Activated T-helper 1 cell treated with anti-CD3 and anti-CD28 coated beads, Interleukin-12 subunit alpha, Interleukin-12 subunit beta, Interleukin-2, Interleukin-4 antibody, amounts not matched to agents 30 ng/mL and 10 ng/mL and 1 ng/mL, durations not matched to agents 14 hours and 24 hours and 36 hours (primary cell): ENCODE measurements at regions of chrX and their contacts with region 1.

Region 1: DNA sequence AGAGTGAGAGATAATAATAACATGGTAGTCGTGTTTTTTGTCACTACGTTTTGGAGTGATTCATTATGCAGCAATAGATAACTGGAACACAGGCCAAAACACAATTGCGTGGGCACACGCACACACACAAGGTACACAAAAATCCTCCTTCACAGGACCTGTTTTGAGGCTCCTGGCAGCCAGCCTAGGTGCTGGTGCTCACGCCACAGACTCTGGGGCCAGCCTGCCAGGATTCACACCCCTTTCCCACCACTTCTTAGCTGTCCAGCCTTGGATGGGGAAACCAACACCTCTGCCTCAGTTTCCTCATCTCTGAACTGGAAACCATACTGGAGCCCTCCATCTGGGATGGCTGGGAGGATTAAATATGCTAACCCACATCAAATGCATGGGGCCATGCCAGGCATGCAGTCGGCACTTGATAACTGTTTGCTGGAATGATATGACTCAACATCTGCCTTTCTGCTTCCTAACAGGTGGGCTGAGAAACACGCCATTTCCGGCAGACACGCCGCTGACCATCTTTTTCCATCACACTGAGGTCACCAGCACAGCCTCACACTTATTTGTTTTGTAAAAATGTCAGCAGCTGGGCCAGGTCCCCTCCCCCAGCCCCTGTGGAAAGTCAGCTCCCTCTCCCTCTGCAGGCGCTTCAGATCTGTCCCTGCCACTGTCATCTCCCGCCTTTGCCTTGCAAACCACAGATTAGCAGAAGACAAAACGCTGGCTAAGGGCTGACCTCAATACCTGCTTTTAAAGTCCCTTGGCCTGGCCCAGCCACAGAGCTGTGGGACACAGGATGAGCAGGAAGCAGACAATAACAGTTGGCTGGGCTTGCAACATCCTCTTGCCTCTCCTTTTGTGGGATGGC is 237.5 kb downstream of the BCOR start:
- DNase-seq: peak; percentile 79
- H3K4me3 Mint-ChIP-seq: peak overlapping the region; percentile 70
- H3K27ac Mint-ChIP-seq: peak overlapping the region; percentile 98
- H3K4me1 Mint-ChIP-seq: peaks cover 60% of the 10 kb centered on the region
- H3K27me3 Mint-ChIP-seq: no peaks in the 10 kb centered on the region

Region 2: GRCh38 chrX:39331082-39331704 is 529.0 kb before region 1 on chrX:
- intact Hi-C with region 1: loop called (anchors 1 kb)
- DNase-seq: peak; percentile 3
- H3K4me3 Mint-ChIP-seq: peak overlapping the region; percentile 42
- H3K27ac Mint-ChIP-seq: peak overlapping the region; percentile 76
- H3K4me1 Mint-ChIP-seq: peaks cover 73% of the 10 kb centered on the region
- H3K27me3 Mint-ChIP-seq: peaks cover 2% of the 10 kb centered on the region

Region 3: DNA sequence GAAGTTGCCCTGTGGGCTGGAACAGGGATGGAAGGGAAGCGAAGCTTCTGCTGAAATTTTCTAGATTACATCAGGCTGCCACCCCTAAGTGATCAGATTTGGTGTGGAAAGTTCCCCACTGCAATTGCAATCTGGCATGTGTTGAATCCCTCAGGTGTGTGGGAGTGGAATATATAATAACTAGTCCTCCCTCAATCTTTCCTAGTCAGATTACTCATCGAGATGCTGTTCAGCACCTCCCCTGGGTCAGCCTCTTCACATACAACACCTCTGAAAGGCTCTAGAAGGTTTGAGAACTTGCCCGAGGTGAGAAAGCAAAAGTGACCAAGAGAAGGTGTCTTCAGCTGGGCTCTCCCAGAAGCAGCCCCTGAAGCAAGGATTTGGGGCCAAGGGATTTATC is 99.3 kb before region 1 on chrX:
- intact Hi-C with region 1: loop called (anchors 1 kb)
- DNase-seq: no peak
- H3K4me3 Mint-ChIP-seq: peak overlapping the region; percentile 61
- H3K27ac Mint-ChIP-seq: peak overlapping the region; percentile 91
- H3K4me1 Mint-ChIP-seq: peaks cover 24% of the 10 kb centered on the region
- H3K27me3 Mint-ChIP-seq: no peaks in the 10 kb centered on the region

Region 4: DNA sequence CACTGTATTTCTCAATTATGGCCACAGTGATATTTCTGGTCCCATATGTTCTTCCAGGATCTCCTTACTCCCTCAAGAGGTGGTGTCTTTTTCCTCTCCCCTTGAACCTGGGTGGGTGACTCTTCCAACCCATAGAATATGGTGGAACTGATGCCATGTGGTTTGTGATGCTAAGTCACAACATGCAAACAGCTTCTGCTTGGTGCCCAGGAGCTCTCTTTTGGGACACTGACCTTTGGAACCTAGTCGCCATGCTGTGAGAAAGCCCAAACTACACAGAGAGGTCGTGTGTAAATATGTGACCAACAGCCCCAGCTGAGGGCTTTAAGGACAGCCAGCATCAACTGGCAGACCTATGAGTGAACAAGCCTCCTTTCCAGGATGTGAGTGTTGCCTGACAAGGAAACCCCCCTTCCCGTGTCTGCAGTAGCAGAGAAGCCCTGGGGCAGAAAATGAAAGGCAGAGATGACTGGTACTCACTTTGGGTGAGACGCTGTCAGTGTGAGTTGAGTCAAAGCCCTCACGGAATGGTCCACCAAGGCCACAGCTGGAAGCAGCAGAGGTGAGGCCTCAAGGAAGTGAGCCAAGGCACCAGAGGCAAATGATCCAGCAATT is 14.1 kb after region 1 on chrX:
- intact Hi-C with region 1: loop called (anchors 1 kb)
- DNase-seq: peak; percentile 68
- H3K4me3 Mint-ChIP-seq: peak overlapping the region; percentile 53
- H3K27ac Mint-ChIP-seq: peak overlapping the region; percentile 88
- H3K4me1 Mint-ChIP-seq: peaks cover 47% of the 10 kb centered on the region
- H3K27me3 Mint-ChIP-seq: peaks cover 6% of the 10 kb centered on the region

Region 5: GRCh38 chrX:40022421-40022820 is 162.2 kb after region 1 on chrX:
- intact Hi-C with region 1: loop called (anchors 1 kb)
- DNase-seq: no peak
- H3K4me3 Mint-ChIP-seq: peak overlapping the region; percentile 29
- H3K27ac Mint-ChIP-seq: peak overlapping the region; percentile 43
- H3K4me1 Mint-ChIP-seq: peaks cover 29% of the 10 kb centered on the region
- H3K27me3 Mint-ChIP-seq: no peaks in the 10 kb centered on the region